Activated B cell treated with CpG ODN at 0.5 μM for 24 hours (primary cell): ENCODE measurements at regions of chrX and their contacts with region 1.

Region 1: GRCh38 chrX:12567857-12568256 is 223.4 kb upstream of the PRPS2 start:
- DNase-seq: no peak
- ATAC-seq: no peak
- H3K4me3 Mint-ChIP-seq: no peak overlapping the region
- H3K27ac Mint-ChIP-seq: no peak overlapping the region
- H3K4me1 Mint-ChIP-seq: peaks cover 6% of the 10 kb centered on the region
- H3K27me3 Mint-ChIP-seq: no peaks in the 10 kb centered on the region
- CTCF ChIP-seq: no peak

Region 2: GRCh38 chrX:11724122-11725017 is 843.5 kb before region 1 on chrX:
- CTCF ChIA-PET with region 1: no interaction called
- POLR2A ChIA-PET with region 1: no interaction called
- intact Hi-C with region 1: loop called (anchors 5 kb)
- DNase-seq: no peak
- ATAC-seq: no peak
- H3K4me3 Mint-ChIP-seq: no peak overlapping the region
- H3K27ac Mint-ChIP-seq: no peak overlapping the region
- H3K4me1 Mint-ChIP-seq: no peaks in the 10 kb centered on the region
- H3K27me3 Mint-ChIP-seq: no peaks in the 10 kb centered on the region
- CTCF ChIP-seq: peak; percentile 21

Region 3: DNA sequence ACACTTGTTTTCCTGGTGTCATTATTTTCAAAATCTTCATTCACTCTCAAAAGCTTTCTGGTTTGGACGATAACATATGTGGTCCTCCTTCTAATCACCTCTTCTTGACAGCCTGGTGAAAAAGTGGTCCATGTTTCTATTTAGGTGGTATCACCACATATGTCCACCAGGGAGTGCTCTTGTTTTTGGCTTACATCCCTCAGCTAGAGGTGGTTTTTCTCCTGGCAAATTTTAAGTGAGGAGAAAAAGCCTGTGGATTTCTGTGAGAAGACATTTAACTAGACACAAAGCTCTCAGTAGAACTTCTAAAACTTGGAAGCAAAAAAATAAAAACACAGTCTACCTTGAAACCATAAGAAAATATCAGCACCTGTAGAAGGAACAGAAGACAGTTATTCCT is 487.6 kb before region 1 on chrX:
- CTCF ChIA-PET with region 1: interaction called, 5 read pairs
- POLR2A ChIA-PET with region 1: no interaction called
- intact Hi-C with region 1: loop called (anchors 1 kb)
- DNase-seq: no peak
- ATAC-seq: no peak
- H3K4me3 Mint-ChIP-seq: no peak overlapping the region
- H3K27ac Mint-ChIP-seq: no peak overlapping the region
- H3K4me1 Mint-ChIP-seq: no peaks in the 10 kb centered on the region
- H3K27me3 Mint-ChIP-seq: peaks cover 2% of the 10 kb centered on the region
- CTCF ChIP-seq: no peak

Region 4: GRCh38 chrX:12701628-12702027 is 133.8 kb after region 1 on chrX:
- CTCF ChIA-PET with region 1: interaction called, 4 read pairs
- POLR2A ChIA-PET with region 1: no interaction called
- intact Hi-C with region 1: loop called (anchors 5 kb)
- DNase-seq: no peak
- ATAC-seq: peak; percentile 58
- H3K4me3 Mint-ChIP-seq: no peak overlapping the region
- H3K27ac Mint-ChIP-seq: no peak overlapping the region
- H3K4me1 Mint-ChIP-seq: peaks cover 39% of the 10 kb centered on the region
- H3K27me3 Mint-ChIP-seq: peaks cover 1% of the 10 kb centered on the region
- CTCF ChIP-seq: no peak

Region 5: GRCh38 chrX:13495232-13495631 is 927.4 kb after region 1 on chrX:
- CTCF ChIA-PET with region 1: no interaction called
- POLR2A ChIA-PET with region 1: no interaction called
- intact Hi-C with region 1: no loop called
- DNase-seq: no peak
- ATAC-seq: no peak
- H3K4me3 Mint-ChIP-seq: no peak overlapping the region
- H3K27ac Mint-ChIP-seq: no peak overlapping the region
- H3K4me1 Mint-ChIP-seq: no peaks in the 10 kb centered on the region
- H3K27me3 Mint-ChIP-seq: no peaks in the 10 kb centered on the region
- CTCF ChIP-seq: no peak